Activated CD4-positive, alpha-beta T cell treated with anti-CD3 and anti-CD28 coated beads, Interleukin-2, amount 10 ng/mL, durations not matched to agents 24 days and 14 days (primary cell): ENCODE measurements at regions of chrX and their contacts with region 1.

Region 1: GRCh38 chrX:107372492-107372891 is 77.0 kb upstream of the FRMPD3 start:
- DNase-seq: no peak
- H3K4me3 Mint-ChIP-seq: no peak overlapping the region
- H3K27ac Mint-ChIP-seq: no peak overlapping the region
- H3K4me1 Mint-ChIP-seq: no peaks in the 10 kb centered on the region
- H3K27me3 Mint-ChIP-seq: no peaks in the 10 kb centered on the region

Region 2: GRCh38 chrX:107118322-107119147 is 254.0 kb before region 1 on chrX and contains the start of gene RBM41:
- intact Hi-C with region 1: no loop called
- DNase-seq: peak; percentile 92
- H3K4me3 Mint-ChIP-seq: peak within 1 kb of the TSS; percentile 97
- H3K27ac Mint-ChIP-seq: peak within 1 kb of the TSS; percentile 97
- H3K4me1 Mint-ChIP-seq: peaks cover 23% of the 10 kb centered on the region
- H3K27me3 Mint-ChIP-seq: no peaks in the 10 kb centered on the region
- total RNA-seq, gene RBM41: 15.7 and 16.2 TPM in 2 replicates

Region 3: DNA sequence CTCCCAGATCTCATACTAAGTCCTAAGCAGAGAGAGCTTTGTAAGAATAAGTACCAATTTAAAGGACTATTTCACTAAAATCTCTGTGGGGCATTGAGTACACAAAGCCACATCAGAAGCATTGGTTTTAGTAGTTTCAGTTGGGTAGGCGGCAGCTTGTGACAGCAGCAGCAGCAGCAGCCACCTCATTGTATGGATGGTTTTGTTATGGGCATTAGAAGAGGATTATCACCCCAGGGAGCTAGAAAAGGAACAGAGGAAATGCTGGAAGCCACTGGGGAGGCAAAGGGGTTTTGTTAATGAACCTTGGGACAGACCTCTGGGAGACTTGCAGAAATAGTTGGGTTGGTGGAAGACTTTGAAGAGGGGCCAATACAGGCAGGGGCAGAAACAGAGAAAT is 17.0 kb before region 1 on chrX:
- intact Hi-C with region 1: loop called (anchors 2 kb)
- DNase-seq: no peak
- H3K4me3 Mint-ChIP-seq: no peak overlapping the region
- H3K27ac Mint-ChIP-seq: no peak overlapping the region
- H3K4me1 Mint-ChIP-seq: no peaks in the 10 kb centered on the region
- H3K27me3 Mint-ChIP-seq: peaks cover 10% of the 10 kb centered on the region

Region 4: GRCh38 chrX:107470972-107471371 is 98.5 kb after region 1 on chrX:
- intact Hi-C with region 1: no loop called
- DNase-seq: no peak
- H3K4me3 Mint-ChIP-seq: no peak overlapping the region
- H3K27ac Mint-ChIP-seq: no peak overlapping the region
- H3K4me1 Mint-ChIP-seq: no peaks in the 10 kb centered on the region
- H3K27me3 Mint-ChIP-seq: no peaks in the 10 kb centered on the region

Region 5: GRCh38 chrX:107484002-107484726 is 111.7 kb after region 1 on chrX:
- intact Hi-C with region 1: no loop called
- DNase-seq: no peak
- H3K4me3 Mint-ChIP-seq: no peak overlapping the region
- H3K27ac Mint-ChIP-seq: no peak overlapping the region
- H3K4me1 Mint-ChIP-seq: no peaks in the 10 kb centered on the region
- H3K27me3 Mint-ChIP-seq: peaks cover 2% of the 10 kb centered on the region